HepG2 (cell line): ENCODE measurements at regions of chr1 and their contacts with region 1.

Region 1: GRCh38 chr1:213564215-213564659 is 423.5 kb upstream of the PROX1 start:
- DNase-seq: peak; percentile 79
- ATAC-seq: peak; percentile 71
- H3K4me3 ChIP-seq: no peak overlapping the region
- H3K27ac ChIP-seq: peak overlapping the region; percentile 38
- H3K4me1 ChIP-seq: peaks cover 30% of the 10 kb centered on the region
- H3K27me3 ChIP-seq: no peaks in the 10 kb centered on the region
- CTCF ChIP-seq: peak; percentile 62
- EP300 ChIP-seq: peak in 1 of 2 experiments; percentile 31; a peak in 1 of 4 replicates
- POLR2A ChIP-seq: no peak
- RAD21 ChIP-seq: peak; percentile 77

Region 2: DNA sequence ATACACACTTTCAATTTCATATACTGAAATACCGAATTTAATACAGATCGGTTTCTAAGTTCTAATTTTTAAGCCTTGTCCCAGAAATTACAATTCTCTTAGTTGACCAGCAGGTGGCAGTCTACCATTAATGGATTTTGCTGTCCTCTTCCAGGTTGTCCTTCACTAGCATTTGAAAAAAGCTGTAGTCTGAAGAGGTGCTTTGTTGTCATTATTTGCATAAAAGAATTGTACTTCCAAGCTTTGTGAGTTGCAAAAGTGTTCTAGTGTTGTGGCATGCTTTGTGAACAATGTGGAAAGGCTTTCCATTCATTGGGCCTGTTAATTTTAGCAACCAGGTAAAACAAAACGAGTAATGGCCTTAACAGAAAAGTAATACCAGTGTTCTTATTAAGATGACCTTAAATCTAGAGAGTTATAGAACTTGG is 319.6 kb before region 1 on chr1:
- CTCF ChIA-PET with region 1: no interaction called
- POLR2A ChIA-PET with region 1: no interaction called
- in situ Hi-C with region 1: no loop called
- intact Hi-C with region 1: loop called (anchors 2 kb)
- DNase-seq: peak; percentile 73
- ATAC-seq: peak; percentile 54
- H3K4me3 ChIP-seq: no peak overlapping the region
- H3K27ac ChIP-seq: no peak overlapping the region
- H3K4me1 ChIP-seq: peaks cover 19% of the 10 kb centered on the region
- H3K27me3 ChIP-seq: no peaks in the 10 kb centered on the region
- CTCF ChIP-seq: peak; percentile 79
- EP300 ChIP-seq: no peak
- POLR2A ChIP-seq: no peak
- RAD21 ChIP-seq: peak; percentile 82

Region 3: GRCh38 chr1:213549982-213550381 is 14.3 kb before region 1 on chr1:
- CTCF ChIA-PET with region 1: no interaction called
- POLR2A ChIA-PET with region 1: no interaction called
- in situ Hi-C with region 1: no loop called
- intact Hi-C with region 1: no loop called
- DNase-seq: no peak
- ATAC-seq: no peak
- H3K4me3 ChIP-seq: no peak overlapping the region
- H3K27ac ChIP-seq: no peak overlapping the region
- H3K4me1 ChIP-seq: peaks cover 7% of the 10 kb centered on the region
- H3K27me3 ChIP-seq: no peaks in the 10 kb centered on the region
- CTCF ChIP-seq: no peak
- EP300 ChIP-seq: no peak
- POLR2A ChIP-seq: no peak
- RAD21 ChIP-seq: no peak

Region 4: GRCh38 chr1:213606252-213606820 is 42.1 kb after region 1 on chr1:
- CTCF ChIA-PET with region 1: no interaction called
- POLR2A ChIA-PET with region 1: no interaction called
- in situ Hi-C with region 1: no loop called
- intact Hi-C with region 1: no loop called
- DNase-seq: no peak
- ATAC-seq: no peak
- H3K4me3 ChIP-seq: no peak overlapping the region
- H3K27ac ChIP-seq: no peak overlapping the region
- H3K4me1 ChIP-seq: peaks cover 13% of the 10 kb centered on the region
- H3K27me3 ChIP-seq: no peaks in the 10 kb centered on the region
- CTCF ChIP-seq: no peak
- EP300 ChIP-seq: no peak
- POLR2A ChIP-seq: no peak
- RAD21 ChIP-seq: no peak

Region 5: DNA sequence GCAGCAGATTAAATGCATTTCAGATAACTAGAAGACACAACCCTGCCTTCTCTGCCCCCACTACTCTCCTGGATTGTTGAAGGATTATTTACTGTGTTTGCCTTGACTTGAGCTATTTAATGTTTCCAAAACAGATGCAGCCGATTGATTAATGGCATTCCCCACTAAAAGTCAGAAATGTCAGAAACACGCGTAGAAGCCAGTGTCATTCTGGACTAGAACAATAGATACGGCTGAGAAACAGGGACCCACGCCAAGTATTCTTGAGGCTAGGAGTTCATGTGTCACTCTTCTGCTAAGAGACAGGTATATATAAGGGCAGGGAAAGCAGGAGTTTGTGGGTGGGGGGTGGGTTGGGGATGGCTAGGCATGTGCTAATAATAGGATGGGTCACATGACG is 56.8 kb after region 1 on chr1:
- CTCF ChIA-PET with region 1: no interaction called
- POLR2A ChIA-PET with region 1: no interaction called
- in situ Hi-C with region 1: no loop called
- intact Hi-C with region 1: no loop called
- DNase-seq: no peak
- ATAC-seq: no peak
- H3K4me3 ChIP-seq: no peak overlapping the region
- H3K27ac ChIP-seq: no peak overlapping the region
- H3K4me1 ChIP-seq: peaks cover 40% of the 10 kb centered on the region
- H3K27me3 ChIP-seq: no peaks in the 10 kb centered on the region; a peak in 1 of 5 replicates
- CTCF ChIP-seq: no peak
- EP300 ChIP-seq: no peak
- POLR2A ChIP-seq: no peak
- RAD21 ChIP-seq: no peak

Region 6: DNA sequence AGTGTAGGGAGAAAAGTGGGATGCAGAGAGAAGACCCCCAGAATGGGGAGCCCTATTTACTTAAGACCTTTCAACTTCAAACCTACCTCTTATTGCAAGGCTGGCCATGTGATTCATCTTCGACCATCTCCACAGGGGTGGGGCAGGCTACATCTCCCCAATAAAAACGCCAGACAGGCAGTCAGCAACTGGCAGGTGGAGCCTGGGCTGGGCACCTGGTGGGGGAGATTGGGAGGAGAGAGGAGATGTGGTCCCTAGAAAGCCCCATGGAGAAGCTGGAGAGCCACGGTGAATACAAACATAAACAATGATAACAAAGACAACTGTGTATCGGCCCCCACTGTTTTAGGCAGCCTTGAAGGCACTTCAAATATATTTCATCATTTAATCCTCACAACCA is 86.8 kb after region 1 on chr1:
- CTCF ChIA-PET with region 1: no interaction called
- POLR2A ChIA-PET with region 1: no interaction called
- in situ Hi-C with region 1: no loop called
- intact Hi-C with region 1: loop called (anchors 2 kb)
- DNase-seq: no peak
- ATAC-seq: peak; percentile 65
- H3K4me3 ChIP-seq: no peak overlapping the region
- H3K27ac ChIP-seq: no peak overlapping the region
- H3K4me1 ChIP-seq: peaks cover 52% of the 10 kb centered on the region
- H3K27me3 ChIP-seq: no peaks in the 10 kb centered on the region
- CTCF ChIP-seq: no peak
- EP300 ChIP-seq: no peak
- POLR2A ChIP-seq: no peak
- RAD21 ChIP-seq: no peak

Region 7: GRCh38 chr1:213793482-213794067 is 229.3 kb after region 1 on chr1:
- CTCF ChIA-PET with region 1: no interaction called
- POLR2A ChIA-PET with region 1: interaction called, 8 read pairs
- in situ Hi-C with region 1: no loop called
- intact Hi-C with region 1: loop called (anchors 2 kb)
- DNase-seq: peak; percentile 93
- ATAC-seq: peak; percentile 95
- H3K4me3 ChIP-seq: peak overlapping the region in 1 of 3 experiments; percentile 15; a peak in 1 of 6 replicates
- H3K27ac ChIP-seq: peak overlapping the region; percentile 74
- H3K4me1 ChIP-seq: peaks cover 70% of the 10 kb centered on the region
- H3K27me3 ChIP-seq: no peaks in the 10 kb centered on the region
- CTCF ChIP-seq: no peak
- EP300 ChIP-seq: peak in 1 of 2 experiments; percentile 82; a peak in 2 of 4 replicates
- POLR2A ChIP-seq: no peak
- RAD21 ChIP-seq: 0 out of 2 replicates have a peak, but pooled peaks have one; percentile 23